Activated CD8-positive, alpha-beta T cell treated with anti-CD3 and anti-CD28 coated beads for 36 hours (primary cell): ENCODE measurements at regions of chr1 and their contacts with region 1.

Region 1: DNA sequence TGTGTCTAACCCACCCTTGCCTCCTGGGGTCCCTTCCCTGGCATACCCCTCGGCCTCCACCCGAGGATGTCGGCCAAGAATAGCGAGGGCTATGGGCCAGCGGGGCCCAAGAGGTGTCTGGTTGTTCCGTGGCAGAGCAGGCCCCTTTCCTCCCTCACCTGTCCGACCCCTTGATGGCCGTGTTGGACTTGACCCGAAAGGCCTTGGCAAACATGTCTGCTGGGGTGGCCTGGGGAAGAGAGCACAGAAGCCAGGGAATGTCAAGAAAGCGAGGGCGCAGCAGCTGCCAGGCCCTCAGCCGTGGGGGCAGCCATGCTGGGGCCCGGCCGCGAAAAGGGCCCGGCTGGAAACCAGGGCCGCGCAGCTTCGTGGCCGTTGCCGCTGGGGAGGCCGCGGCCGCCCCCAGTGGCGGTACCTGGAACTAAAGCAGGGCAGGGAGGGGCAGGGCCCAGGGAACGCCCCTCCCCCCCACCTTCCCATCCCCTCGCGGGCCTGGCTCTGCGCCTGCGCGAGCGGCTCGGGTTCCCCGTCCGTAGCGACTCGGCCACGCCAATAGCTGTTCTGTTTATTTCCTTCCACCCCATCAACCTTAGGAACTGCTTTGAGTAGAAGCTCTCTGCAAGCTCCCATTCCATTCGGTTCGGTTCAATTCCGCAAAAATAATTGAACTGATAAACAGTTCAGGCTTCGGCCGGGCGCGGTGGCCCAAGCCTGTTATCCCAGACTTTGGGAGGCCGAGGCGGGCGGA is at the start of gene EIF2D:
- DNase-seq: peak; percentile 95
- ATAC-seq: peak; percentile 96
- H3K4me3 Mint-ChIP-seq: peak within 1 kb of the TSS; percentile 91
- H3K27ac Mint-ChIP-seq: peak within 1 kb of the TSS; percentile 92
- H3K4me1 Mint-ChIP-seq: peaks cover 39% of the 10 kb centered on the region
- H3K27me3 Mint-ChIP-seq: no peaks in the 10 kb centered on the region
- CTCF ChIP-seq: peak; percentile 89
- total RNA-seq, gene EIF2D: 100 to 102 TPM

Region 2: GRCh38 chr1:206524739-206525369 is 87.4 kb before region 1 on chr1:
- CTCF ChIA-PET with region 1: no interaction called
- POLR2A ChIA-PET with region 1: no interaction called
- intact Hi-C with region 1: no loop called
- DNase-seq: no peak
- ATAC-seq: peak; percentile 62
- H3K4me3 Mint-ChIP-seq: no peak overlapping the region
- H3K27ac Mint-ChIP-seq: no peak overlapping the region
- H3K4me1 Mint-ChIP-seq: peaks cover 5% of the 10 kb centered on the region
- H3K27me3 Mint-ChIP-seq: no peaks in the 10 kb centered on the region
- CTCF ChIP-seq: no peak

Region 3: GRCh38 chr1:206551986-206552326 is 60.3 kb before region 1 on chr1:
- CTCF ChIA-PET with region 1: interaction called, 10 read pairs
- POLR2A ChIA-PET with region 1: interaction called, 7 read pairs
- intact Hi-C with region 1: no loop called
- DNase-seq: peak; percentile 94
- ATAC-seq: peak; percentile 82
- H3K4me3 Mint-ChIP-seq: peak overlapping the region; percentile 64
- H3K27ac Mint-ChIP-seq: peak overlapping the region; percentile 88
- H3K4me1 Mint-ChIP-seq: peaks cover 53% of the 10 kb centered on the region
- H3K27me3 Mint-ChIP-seq: no peaks in the 10 kb centered on the region
- CTCF ChIP-seq: no peak

Region 4: DNA sequence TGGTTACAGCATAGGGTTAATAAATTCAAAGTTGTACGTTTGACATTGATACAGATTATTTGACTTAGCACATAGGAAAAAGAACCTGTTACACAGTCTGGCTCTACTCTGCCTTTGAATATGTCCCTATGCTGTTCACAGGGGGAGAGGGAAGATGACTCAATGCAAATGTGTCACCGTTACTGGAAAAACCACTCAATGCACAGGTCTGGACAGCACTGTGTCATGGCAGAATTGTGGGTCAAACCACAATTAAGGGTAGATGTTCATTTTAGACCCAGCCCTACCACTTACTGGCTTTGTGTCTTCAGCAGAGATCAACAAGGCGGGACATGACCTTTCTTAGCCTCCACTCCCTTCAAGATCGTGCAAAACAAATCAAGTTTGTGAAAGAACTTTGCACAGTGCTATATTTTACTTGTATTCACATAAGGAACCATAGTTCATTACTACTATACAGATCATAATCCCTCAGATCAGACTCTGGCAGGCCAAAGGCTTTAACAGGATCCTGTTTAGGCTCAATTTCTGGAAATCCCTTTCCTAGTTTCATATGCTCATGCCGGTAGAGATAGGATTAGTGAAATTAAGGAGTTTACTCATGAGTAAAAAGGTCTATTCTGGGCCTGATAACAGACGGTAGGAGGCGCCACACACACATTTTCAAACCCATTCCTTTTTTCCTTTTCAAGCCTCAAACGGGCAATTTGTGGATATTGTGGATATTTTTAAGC is 22.1 kb before region 1 on chr1:
- CTCF ChIA-PET with region 1: interaction called, 17 read pairs
- POLR2A ChIA-PET with region 1: interaction called, 5 read pairs
- intact Hi-C with region 1: no loop called
- DNase-seq: peak; percentile 85
- ATAC-seq: peak; percentile 96
- H3K4me3 Mint-ChIP-seq: peak overlapping the region; percentile 55
- H3K27ac Mint-ChIP-seq: peak overlapping the region; percentile 97
- H3K4me1 Mint-ChIP-seq: peaks cover 65% of the 10 kb centered on the region
- H3K27me3 Mint-ChIP-seq: no peaks in the 10 kb centered on the region
- CTCF ChIP-seq: peak; percentile 68

Region 5: DNA sequence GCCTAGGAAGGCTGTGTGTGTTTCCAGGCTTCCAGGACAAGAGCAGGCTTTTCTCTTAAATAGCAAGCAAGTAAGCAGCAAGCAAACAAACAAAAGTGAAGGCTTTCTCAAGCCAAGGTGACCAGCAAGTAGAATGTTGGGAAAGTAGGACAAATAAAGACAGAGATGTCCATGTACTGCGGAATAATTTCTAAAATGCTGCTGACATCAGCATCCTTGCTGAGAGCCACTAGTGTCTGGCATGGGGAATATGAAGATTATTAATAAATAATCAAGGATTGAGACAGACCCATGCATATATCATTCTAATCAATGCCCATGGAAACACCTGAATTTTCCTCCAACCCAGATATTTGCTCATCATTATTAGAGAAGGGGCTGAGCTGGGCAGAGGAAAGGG is 16.6 kb after region 1 on chr1:
- CTCF ChIA-PET with region 1: interaction called, 66 read pairs
- POLR2A ChIA-PET with region 1: interaction called, 3 read pairs
- intact Hi-C with region 1: no loop called
- DNase-seq: no peak
- ATAC-seq: no peak
- H3K4me3 Mint-ChIP-seq: no peak overlapping the region
- H3K27ac Mint-ChIP-seq: no peak overlapping the region
- H3K4me1 Mint-ChIP-seq: no peaks in the 10 kb centered on the region
- H3K27me3 Mint-ChIP-seq: peaks cover 24% of the 10 kb centered on the region
- CTCF ChIP-seq: no peak

Region 6: GRCh38 chr1:206635080-206635977 is 23.0 kb after region 1 on chr1 and contains the start of gene DYRK3:
- CTCF ChIA-PET with region 1: interaction called, 66 read pairs
- POLR2A ChIA-PET with region 1: interaction called, 3 read pairs
- intact Hi-C with region 1: no loop called
- DNase-seq: peak; percentile 93
- ATAC-seq: peak; percentile 93
- H3K4me3 Mint-ChIP-seq: peak within 1 kb of the TSS; percentile 78
- H3K27ac Mint-ChIP-seq: peak within 1 kb of the TSS; percentile 88
- H3K4me1 Mint-ChIP-seq: peaks cover 25% of the 10 kb centered on the region
- H3K27me3 Mint-ChIP-seq: peaks cover 28% of the 10 kb centered on the region
- CTCF ChIP-seq: no peak
- total RNA-seq, gene DYRK3: 4.7 to 4.9 TPM

Region 7: GRCh38 chr1:206658264-206658980 is 46.1 kb after region 1 on chr1:
- CTCF ChIA-PET with region 1: interaction called, 84 read pairs
- POLR2A ChIA-PET with region 1: interaction called, 3 read pairs
- intact Hi-C with region 1: loop called (anchors 10 kb)
- DNase-seq: peak; percentile 67
- ATAC-seq: peak; percentile 84
- H3K4me3 Mint-ChIP-seq: no peak overlapping the region
- H3K27ac Mint-ChIP-seq: peak overlapping the region; percentile 42
- H3K4me1 Mint-ChIP-seq: peaks cover 29% of the 10 kb centered on the region
- H3K27me3 Mint-ChIP-seq: peaks cover 31% of the 10 kb centered on the region
- CTCF ChIP-seq: peak; percentile 99

Region 8: DNA sequence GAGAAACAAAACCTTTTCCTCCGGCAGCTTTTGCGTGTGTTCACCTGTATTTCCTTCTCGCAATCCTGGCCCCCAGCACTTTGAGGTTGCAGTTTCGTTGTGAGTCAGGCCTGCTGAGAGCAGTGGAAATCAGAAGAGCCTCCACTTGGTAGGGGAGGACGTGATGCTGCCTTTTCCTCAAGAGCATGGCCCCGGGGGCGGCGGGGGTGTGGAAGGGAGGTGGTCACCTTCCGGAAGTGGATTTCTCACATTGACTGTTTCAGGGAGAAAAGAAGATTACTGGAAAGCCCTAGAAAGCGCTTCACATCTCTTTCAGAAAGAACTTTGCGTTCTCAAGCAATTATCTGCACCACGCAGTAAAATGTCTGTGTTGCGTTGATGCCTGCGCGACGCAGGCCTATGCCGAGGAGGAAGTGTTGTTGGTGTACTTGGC is 172.2 kb after region 1 on chr1:
- CTCF ChIA-PET with region 1: no interaction called
- POLR2A ChIA-PET with region 1: no interaction called
- intact Hi-C with region 1: no loop called
- DNase-seq: peak; percentile 97
- ATAC-seq: peak; percentile 75
- H3K4me3 Mint-ChIP-seq: peak overlapping the region; percentile 11
- H3K27ac Mint-ChIP-seq: peak overlapping the region; percentile 78
- H3K4me1 Mint-ChIP-seq: peaks cover 65% of the 10 kb centered on the region
- H3K27me3 Mint-ChIP-seq: no peaks in the 10 kb centered on the region
- CTCF ChIP-seq: no peak